Posterior cingulate gyrus (tissue), 11 donors: ENCODE measurements at regions of chr11 and their contacts with region 1.

Region 1: DNA sequence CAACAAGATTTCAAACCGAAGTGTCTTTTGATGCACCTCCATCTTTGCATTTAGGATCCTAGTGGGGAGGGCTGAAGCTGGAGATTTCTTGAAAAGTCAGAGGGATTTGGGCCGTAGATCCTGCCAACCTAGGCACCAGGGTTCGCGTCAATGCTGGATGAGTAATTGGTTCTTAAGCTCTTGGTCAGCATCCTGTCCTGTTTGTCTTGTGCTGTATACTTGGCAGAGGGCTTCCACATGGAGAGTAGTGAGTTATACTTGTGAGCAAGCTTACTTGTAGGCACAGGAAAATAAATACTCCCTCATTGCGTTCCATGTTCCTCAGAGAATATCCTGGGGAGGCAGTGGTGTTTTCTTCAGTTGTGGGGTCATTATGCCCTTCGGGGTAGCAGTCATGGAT is 12.6 kb downstream of the INSC start:
- DNase-seq: no peak

Region 2: GRCh38 chr11:15053191-15053685 is 74.1 kb before region 1 on chr11:
- intact Hi-C with region 1: no loop called
- DNase-seq: no peak

Region 3: DNA sequence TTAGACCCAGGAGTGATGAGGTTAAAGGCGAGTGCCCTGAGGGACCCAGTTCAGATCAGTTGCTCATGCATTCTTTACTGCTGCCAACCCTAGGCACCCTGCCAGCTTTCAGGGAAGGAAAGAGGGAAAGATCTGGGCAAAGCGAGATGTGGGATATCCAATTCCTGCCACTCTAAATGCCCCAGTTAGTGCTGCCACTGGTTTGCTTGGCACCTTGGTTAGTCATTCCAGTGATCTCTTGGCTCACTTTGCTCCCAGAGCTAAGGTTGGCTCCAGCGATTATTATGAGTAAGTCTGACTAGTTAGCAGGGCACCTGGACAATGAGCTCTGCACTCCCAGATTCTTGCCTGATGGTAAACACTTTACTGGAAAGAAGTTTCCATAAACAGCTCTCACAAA is 72.4 kb after region 1 on chr11:
- intact Hi-C with region 1: loop called (anchors 5 kb)
- DNase-seq: peak in 1 of 10 donors; percentile 23

Region 4: DNA sequence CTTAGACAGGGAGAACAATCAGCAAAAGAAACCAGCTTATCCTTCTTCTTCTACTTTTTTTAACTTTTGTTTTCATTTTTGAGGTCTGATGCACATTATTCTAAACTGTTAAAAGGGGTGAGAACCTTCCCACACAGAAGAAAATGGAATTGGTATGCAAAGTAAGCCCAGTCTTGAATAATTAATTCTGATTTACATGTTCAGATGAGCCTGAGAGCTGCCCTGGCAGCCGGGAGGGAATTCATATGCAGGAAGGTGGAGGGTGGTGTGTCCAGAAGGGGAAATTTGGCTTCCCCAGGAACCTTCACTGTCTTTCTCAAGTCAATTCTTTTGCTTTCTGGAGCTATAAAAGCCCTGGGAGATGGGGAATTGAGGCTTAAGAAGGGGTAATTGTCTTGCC is 168.4 kb after region 1 on chr11:
- intact Hi-C with region 1: no loop called
- DNase-seq: no peak